ENCODE measurements at regions of chr17 and their contacts with region 1.

Region 1: GRCh38 chr17:47970704-47971463 is at the start of gene CDK5RAP3:
- DNase-seq: peak; percentile 100
- H3K4me3 ChIP-seq: peak within 1 kb of the TSS; percentile 72
- H3K27ac ChIP-seq: peak within 1 kb of the TSS; percentile 62
- H3K4me1 ChIP-seq: peaks cover 4% of the 10 kb centered on the region
- H3K27me3 ChIP-seq: no peaks in the 10 kb centered on the region
- CTCF ChIP-seq: peak; percentile 97
- total RNA-seq, gene CDK5RAP3: 131 to 172 TPM

Region 2: GRCh38 chr17:47802341-47803022 is 168.4 kb before region 1 on chr17:
- intact Hi-C with region 1: no loop called
- DNase-seq: peak; percentile 55
- H3K4me3 ChIP-seq: no peak overlapping the region
- H3K27ac ChIP-seq: no peak overlapping the region
- H3K4me1 ChIP-seq: no peaks in the 10 kb centered on the region
- H3K27me3 ChIP-seq: no peaks in the 10 kb centered on the region
- CTCF ChIP-seq: peak; percentile 58

Region 3: DNA sequence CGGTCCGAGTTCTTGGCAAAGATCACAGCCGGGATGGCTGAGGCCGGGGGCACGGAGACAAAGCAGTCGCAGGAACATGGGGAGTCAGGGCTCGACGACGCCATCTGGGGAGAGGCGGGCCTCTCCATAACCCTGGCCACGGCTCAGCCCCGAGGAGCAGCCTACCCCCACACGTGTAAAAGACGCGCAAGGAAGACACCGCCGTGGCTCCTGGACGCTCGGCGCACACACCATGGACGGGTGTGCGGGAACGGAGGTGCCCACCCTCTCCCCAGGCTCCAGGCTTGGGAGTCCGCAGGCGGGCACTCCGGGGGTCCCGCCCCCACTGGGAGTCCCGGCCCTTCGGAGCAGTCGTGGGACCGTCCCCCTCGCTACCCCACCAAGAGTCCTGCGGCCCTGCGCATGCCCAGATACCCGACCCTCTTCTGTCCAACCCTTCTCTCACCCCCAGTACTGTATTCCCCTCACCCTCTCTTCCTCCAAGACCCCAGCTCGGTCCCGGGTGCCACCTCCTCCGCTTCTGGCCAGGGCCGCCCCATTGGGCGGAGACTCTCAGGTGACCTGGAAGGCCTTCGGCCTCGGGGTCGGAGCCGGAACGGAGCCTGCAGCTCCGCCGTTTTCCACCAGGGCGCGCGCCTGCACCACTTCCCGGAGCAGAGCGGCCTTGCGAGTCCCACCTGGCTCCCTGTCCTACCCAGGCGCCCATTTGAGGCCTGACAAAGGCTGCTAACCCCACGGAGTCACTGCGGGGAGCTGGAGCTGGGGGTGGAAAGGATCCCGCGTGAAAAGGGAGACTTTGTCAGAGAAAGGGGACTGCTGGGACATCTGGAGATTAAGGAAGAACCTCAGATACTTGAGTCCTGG is 129.9 kb before region 1 on chr17 and contains the start of gene SCRN2:
- intact Hi-C with region 1: loop called (anchors 10 kb)
- DNase-seq: peak; percentile 96
- H3K4me3 ChIP-seq: peak within 1 kb of the TSS; percentile 72
- H3K27ac ChIP-seq: peak within 1 kb of the TSS; percentile 63
- H3K4me1 ChIP-seq: peaks cover 15% of the 10 kb centered on the region
- H3K27me3 ChIP-seq: no peaks in the 10 kb centered on the region
- CTCF ChIP-seq: peak; percentile 94
- total RNA-seq, gene SCRN2: 36.8 to 40.0 TPM

Region 4: DNA sequence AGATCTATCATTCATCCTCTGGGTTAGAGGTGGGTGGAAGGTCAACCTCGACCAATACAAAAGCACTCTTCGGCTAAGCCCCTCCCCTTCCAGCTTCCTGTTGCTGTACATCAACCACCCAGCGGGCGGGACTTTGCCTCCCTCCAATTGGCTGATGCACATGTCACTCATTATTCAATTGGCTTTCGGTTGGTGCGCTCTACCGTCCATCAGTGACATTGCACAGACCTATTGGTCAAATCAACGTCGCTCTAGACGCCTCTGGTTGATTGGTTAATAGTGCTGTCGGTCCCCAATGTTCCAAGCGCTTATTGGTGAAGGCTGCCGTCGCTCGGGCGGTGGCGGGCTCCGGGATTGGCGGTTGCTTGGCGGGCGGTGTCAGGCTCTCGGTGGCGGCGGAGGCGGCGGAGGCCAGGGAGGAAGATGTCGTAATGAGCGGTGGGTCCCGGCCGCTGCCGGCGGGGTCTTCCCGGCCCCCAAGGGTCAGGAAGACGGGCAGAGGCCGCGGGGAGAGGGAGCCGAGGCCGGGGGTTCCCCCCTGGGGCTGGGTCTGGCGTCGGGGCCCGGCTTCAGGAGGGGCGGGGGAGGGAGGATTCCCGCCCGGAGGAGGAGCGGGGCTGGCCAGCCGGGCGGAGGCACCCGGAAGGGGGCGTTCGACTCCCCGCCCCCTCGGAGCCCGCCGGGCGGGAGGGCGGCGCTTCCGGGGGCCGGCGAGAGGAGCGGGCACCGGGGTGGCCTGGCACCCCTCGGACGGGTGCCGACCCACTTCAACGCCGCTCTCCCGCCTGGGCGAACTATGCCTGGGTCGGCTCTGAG is 74.8 kb before region 1 on chr17 and contains the start of gene SP2:
- intact Hi-C with region 1: loop called (anchors 2 kb)
- DNase-seq: peak; percentile 100
- H3K4me3 ChIP-seq: peak within 1 kb of the TSS; percentile 82
- H3K27ac ChIP-seq: peak within 1 kb of the TSS; percentile 86
- H3K4me1 ChIP-seq: peaks cover 18% of the 10 kb centered on the region
- H3K27me3 ChIP-seq: no peaks in the 10 kb centered on the region
- CTCF ChIP-seq: no peak
- total RNA-seq, gene SP2: 18.1 to 21.6 TPM

Region 5: GRCh38 chr17:47949136-47949759 is 21.6 kb before region 1 on chr17:
- intact Hi-C with region 1: loop called (anchors 2 kb)
- DNase-seq: peak; percentile 96
- H3K4me3 ChIP-seq: no peak overlapping the region
- H3K27ac ChIP-seq: peak overlapping the region; percentile 86
- H3K4me1 ChIP-seq: no peaks in the 10 kb centered on the region
- H3K27me3 ChIP-seq: no peaks in the 10 kb centered on the region
- CTCF ChIP-seq: peak; percentile 73

Measured in colonic mucosa (tissue), 4 donors.